T-cell (primary cell): ENCODE measurements at regions of chr11 and their contacts with region 1.

Region 1: DNA sequence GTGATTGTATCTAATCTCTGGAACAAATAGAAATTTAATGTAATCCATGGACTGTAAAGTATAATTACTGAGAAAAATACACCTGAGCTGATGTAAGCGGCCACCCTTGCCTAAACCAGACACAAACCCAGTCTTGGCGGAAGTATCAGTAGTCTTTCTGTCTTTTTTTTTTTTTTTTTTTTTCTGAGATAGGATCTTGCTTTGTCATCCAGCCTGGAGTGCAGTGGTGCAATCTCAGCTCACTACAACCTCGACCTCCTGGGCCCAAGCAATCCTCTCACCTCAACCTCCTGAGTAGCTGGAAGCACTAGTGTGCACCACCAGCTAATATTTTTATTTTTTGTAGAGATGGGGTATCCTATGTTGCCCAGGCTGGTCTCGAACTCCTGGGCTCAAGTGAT is 5.5 kb upstream of the CXCR5 start:
- DNase-seq: peak in 11 of 35 experiments; percentile 20 to 65 (median 32)
- ATAC-seq: peak; percentile 6 to 30 (median 21)
- H3K4me3 ChIP-seq: no peak overlapping the region
- H3K4me3 Mint-ChIP-seq: peak overlapping the region in 1 of 3 donors; percentile 79
- H3K27ac ChIP-seq: peak overlapping the region; percentile 88
- H3K27ac Mint-ChIP-seq: peak overlapping the region; percentile 97 to 98
- H3K4me1 ChIP-seq: peaks cover 58 to 96% of the 10 kb centered on the region in 2 experiments
- H3K4me1 Mint-ChIP-seq: peaks cover 91 to 96% (median 94%) of the 10 kb centered on the region in 3 donors
- H3K27me3 ChIP-seq: no peaks in the 10 kb centered on the region
- H3K27me3 Mint-ChIP-seq: no peaks in the 10 kb centered on the region

Region 2: DNA sequence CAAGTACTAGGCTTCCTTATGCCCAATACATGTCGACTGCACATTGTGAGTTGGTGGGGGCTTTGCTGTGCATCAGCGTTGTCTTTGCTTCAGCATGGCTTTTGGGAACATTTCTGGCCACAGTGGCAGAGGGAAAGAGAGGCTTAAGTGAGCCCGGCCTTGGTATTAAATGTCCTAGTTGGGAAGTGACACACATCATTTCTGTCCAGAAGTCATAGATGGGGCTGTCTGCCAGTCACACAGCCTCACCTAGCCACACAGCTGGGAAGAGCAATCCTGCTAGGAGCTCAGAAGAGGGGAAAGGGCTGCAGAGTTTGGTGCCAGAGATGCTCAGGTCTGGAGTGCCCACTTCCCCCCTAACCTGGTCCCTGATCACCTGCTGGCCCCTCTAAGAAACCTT is 226.3 kb before region 1 on chr11:
- CTCF ChIA-PET with region 1: interaction called in 1 of 2 experiments, 11 read pairs
- POLR2A ChIA-PET with region 1: no interaction called
- DNase-seq: no peak
- ATAC-seq: no peak
- H3K4me3 ChIP-seq: no peak overlapping the region
- H3K4me3 Mint-ChIP-seq: no peak overlapping the region
- H3K27ac ChIP-seq: no peak overlapping the region
- H3K27ac Mint-ChIP-seq: no peak overlapping the region
- H3K4me1 ChIP-seq: peaks cover 0 to 4% of the 10 kb centered on the region in 2 experiments
- H3K4me1 Mint-ChIP-seq: peaks cover 9 to 10% (median 10%) of the 10 kb centered on the region in 3 donors
- H3K27me3 ChIP-seq: no peaks in the 10 kb centered on the region
- H3K27me3 Mint-ChIP-seq: no peaks in the 10 kb centered on the region

Region 3: GRCh38 chr11:118688851-118689849 is 189.0 kb before region 1 on chr11:
- CTCF ChIA-PET with region 1: no interaction called
- POLR2A ChIA-PET with region 1: no interaction called
- DNase-seq: peak in 1 of 35 experiments; percentile 12
- ATAC-seq: peak in 2 of 4 experiments; percentile 2 to 6
- H3K4me3 ChIP-seq: no peak overlapping the region
- H3K4me3 Mint-ChIP-seq: peak overlapping the region in 1 of 3 donors; percentile 75
- H3K27ac ChIP-seq: no peak overlapping the region
- H3K27ac Mint-ChIP-seq: no peak overlapping the region
- H3K4me1 ChIP-seq: peaks cover 14 to 52% of the 10 kb centered on the region in 2 experiments
- H3K4me1 Mint-ChIP-seq: peaks cover 36 to 50% (median 46%) of the 10 kb centered on the region in 3 donors
- H3K27me3 ChIP-seq: peaks cover 0 to 16% of the 10 kb centered on the region in 2 experiments
- H3K27me3 Mint-ChIP-seq: peaks cover 0 to 2% of the 10 kb centered on the region in 2 donors

Region 4: DNA sequence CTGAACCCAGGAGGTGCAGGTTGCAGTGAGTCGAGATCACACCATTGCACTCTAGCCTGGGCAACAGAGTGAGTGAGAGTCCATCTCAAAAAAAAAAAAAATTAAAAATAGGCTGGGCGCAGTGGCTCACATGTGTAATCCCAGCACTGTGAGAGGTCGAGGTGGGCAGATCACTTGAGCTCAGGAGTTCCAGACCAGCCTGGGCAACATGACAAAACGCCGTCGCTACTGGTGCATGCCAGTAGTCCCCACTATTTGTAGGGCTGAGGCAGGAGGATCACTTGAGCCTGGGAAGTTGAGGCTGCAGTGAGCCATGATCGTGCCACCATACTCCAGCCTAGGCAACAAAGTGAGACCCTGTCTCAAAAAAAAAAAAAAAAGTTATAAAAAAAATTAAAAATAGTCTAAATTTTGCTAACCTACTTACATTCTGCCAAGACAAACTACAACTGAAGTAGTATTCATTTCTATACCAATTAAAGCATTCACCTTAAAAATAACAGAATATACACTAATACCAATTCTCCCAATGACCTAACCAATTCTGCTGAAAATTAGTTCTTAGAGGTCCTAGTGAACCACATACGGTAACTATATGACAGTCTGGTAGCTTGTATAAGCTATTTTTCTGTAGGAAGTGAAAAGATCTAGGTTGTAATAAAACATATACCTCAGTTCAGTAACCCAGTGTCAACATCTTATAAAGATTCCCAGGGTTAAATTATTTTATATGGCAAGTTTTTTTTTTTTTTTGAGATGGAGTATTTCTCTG is 94.3 kb before region 1 on chr11:
- CTCF ChIA-PET with region 1: interaction called in 1 of 2 experiments, 15 read pairs
- POLR2A ChIA-PET with region 1: interaction called in 1 of 2 experiments, 28 read pairs
- DNase-seq: no peak
- ATAC-seq: no peak
- H3K4me3 ChIP-seq: no peak overlapping the region
- H3K4me3 Mint-ChIP-seq: peak overlapping the region; percentile 28 to 72 (median 57)
- H3K27ac ChIP-seq: no peak overlapping the region
- H3K27ac Mint-ChIP-seq: no peak overlapping the region
- H3K4me1 ChIP-seq: peaks cover 38 to 58% of the 10 kb centered on the region in 2 experiments
- H3K4me1 Mint-ChIP-seq: peaks cover 54 to 75% (median 66%) of the 10 kb centered on the region in 3 donors
- H3K27me3 ChIP-seq: no peaks in the 10 kb centered on the region
- H3K27me3 Mint-ChIP-seq: no peaks in the 10 kb centered on the region

Region 5: GRCh38 chr11:118889781-118890180 is 11.6 kb after region 1 on chr11:
- CTCF ChIA-PET with region 1: interaction called, 6 to 9 read pairs
- POLR2A ChIA-PET with region 1: interaction called in 1 of 2 experiments, 15 read pairs
- DNase-seq: no peak
- ATAC-seq: no peak
- H3K4me3 ChIP-seq: no peak overlapping the region
- H3K4me3 Mint-ChIP-seq: peak overlapping the region in 1 of 3 donors; percentile 88
- H3K27ac ChIP-seq: peak overlapping the region; percentile 11
- H3K27ac Mint-ChIP-seq: peak overlapping the region; percentile 83 to 86
- H3K4me1 ChIP-seq: peaks cover 27 to 93% of the 10 kb centered on the region in 2 experiments
- H3K4me1 Mint-ChIP-seq: peaks cover 81 to 88% (median 81%) of the 10 kb centered on the region in 3 donors
- H3K27me3 ChIP-seq: no peaks in the 10 kb centered on the region
- H3K27me3 Mint-ChIP-seq: no peaks in the 10 kb centered on the region

Region 6: GRCh38 chr11:118901494-118902335 is 23.6 kb after region 1 on chr11:
- CTCF ChIA-PET with region 1: no interaction called
- POLR2A ChIA-PET with region 1: no interaction called
- DNase-seq: peak in 1 of 35 experiments; percentile 27
- ATAC-seq: peak in 3 of 4 experiments; percentile 5 to 21 (median 6)
- H3K4me3 ChIP-seq: no peak overlapping the region
- H3K4me3 Mint-ChIP-seq: no peak overlapping the region
- H3K27ac ChIP-seq: no peak overlapping the region
- H3K27ac Mint-ChIP-seq: peak overlapping the region in 1 of 2 donors; percentile 67
- H3K4me1 ChIP-seq: peaks cover 8 to 59% of the 10 kb centered on the region in 2 experiments
- H3K4me1 Mint-ChIP-seq: peaks cover 34 to 38% (median 36%) of the 10 kb centered on the region in 3 donors
- H3K27me3 ChIP-seq: no peaks in the 10 kb centered on the region
- H3K27me3 Mint-ChIP-seq: no peaks in the 10 kb centered on the region

Region 7: DNA sequence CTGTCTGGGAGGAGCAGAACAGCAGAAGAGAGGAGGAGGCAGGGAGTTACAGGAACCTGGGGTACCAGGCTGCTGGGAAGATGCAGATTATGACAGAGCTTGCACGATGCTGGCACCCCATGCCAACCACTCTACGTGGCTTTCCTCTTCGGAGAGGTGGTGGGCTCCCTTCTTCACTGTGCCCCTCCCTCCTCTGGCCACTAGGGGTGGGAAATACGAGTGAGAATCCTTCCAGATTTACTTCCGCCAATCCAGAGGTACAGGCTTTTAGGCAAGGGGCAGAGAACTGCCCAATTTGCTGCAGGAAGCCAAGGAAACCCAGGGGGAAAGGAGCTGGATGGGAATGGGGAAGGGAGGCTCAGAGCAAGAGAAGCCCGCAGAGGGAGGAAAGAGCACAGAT is 166.5 kb after region 1 on chr11:
- CTCF ChIA-PET with region 1: no interaction called
- POLR2A ChIA-PET with region 1: no interaction called
- DNase-seq: no peak
- ATAC-seq: peak in 1 of 4 experiments; percentile 32
- H3K4me3 ChIP-seq: no peak overlapping the region
- H3K4me3 Mint-ChIP-seq: no peak overlapping the region
- H3K27ac ChIP-seq: no peak overlapping the region
- H3K27ac Mint-ChIP-seq: no peak overlapping the region
- H3K4me1 ChIP-seq: no peaks in the 10 kb centered on the region
- H3K4me1 Mint-ChIP-seq: no peaks in the 10 kb centered on the region
- H3K27me3 ChIP-seq: no peaks in the 10 kb centered on the region
- H3K27me3 Mint-ChIP-seq: no peaks in the 10 kb centered on the region